Mammary epithelial cell (primary cell): ENCODE measurements at regions of chr19 and their contacts with region 1.

Region 1: DNA sequence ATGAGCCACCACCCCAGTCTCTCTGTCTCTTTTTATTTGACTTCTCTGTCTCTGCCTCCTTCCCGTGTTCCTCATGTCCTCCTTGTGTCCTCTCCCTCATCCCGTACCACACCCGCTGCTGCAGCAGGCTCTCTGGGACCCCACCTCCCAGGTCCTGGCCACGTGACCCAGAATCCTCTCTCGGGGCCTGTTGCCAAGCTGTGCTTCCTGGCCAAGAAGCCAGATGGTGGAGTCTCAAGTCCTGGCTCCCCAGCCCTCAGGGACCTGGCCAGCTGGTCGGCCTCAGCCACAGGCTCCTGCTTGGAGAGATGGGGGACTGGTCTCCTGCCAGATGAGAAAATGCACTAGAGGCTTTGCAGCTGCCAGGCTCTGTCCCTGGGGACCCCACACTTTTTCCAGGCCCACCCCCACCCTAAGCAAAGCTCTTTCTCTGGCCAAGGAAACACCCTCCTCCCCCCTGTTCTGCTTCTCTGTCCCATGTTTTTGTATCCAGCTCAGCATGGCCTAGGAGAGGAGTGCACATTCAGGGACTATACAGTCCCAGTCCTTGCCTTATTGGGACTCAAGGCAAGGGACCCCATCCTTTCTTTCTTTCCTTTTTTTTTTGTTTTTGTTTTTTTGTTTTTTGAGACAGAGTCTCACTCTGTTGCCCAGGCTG is 34.3 kb upstream of the SHKBP1 start:
- DNase-seq: no peak
- H3K4me3 ChIP-seq: no peak overlapping the region
- H3K27ac ChIP-seq: no peak overlapping the region
- H3K4me1 ChIP-seq: no peaks in the 10 kb centered on the region
- H3K27me3 ChIP-seq: no peaks in the 10 kb centered on the region
- CTCF ChIP-seq: no peak

Region 2: GRCh38 chr19:40365613-40366401 is 176.5 kb before region 1 on chr19:
- CTCF ChIA-PET with region 1: no interaction called
- dilution Hi-C with region 1: loop called (anchors 5 kb)
- in situ Hi-C with region 1: no loop called
- intact Hi-C with region 1: no loop called
- DNase-seq: no peak
- H3K4me3 ChIP-seq: peak overlapping the region; percentile 50 to 54 (median 53)
- H3K27ac ChIP-seq: no peak overlapping the region
- H3K4me1 ChIP-seq: peaks cover 9% of the 10 kb centered on the region
- H3K27me3 ChIP-seq: no peaks in the 10 kb centered on the region
- CTCF ChIP-seq: no peak

Region 3: GRCh38 chr19:40497214-40497613 is 45.1 kb before region 1 on chr19:
- CTCF ChIA-PET with region 1: no interaction called
- dilution Hi-C with region 1: no loop called
- in situ Hi-C with region 1: no loop called
- intact Hi-C with region 1: no loop called
- DNase-seq: no peak
- H3K4me3 ChIP-seq: no peak overlapping the region
- H3K27ac ChIP-seq: no peak overlapping the region
- H3K4me1 ChIP-seq: no peaks in the 10 kb centered on the region
- H3K27me3 ChIP-seq: peaks cover 4% of the 10 kb centered on the region
- CTCF ChIP-seq: no peak

Region 4: DNA sequence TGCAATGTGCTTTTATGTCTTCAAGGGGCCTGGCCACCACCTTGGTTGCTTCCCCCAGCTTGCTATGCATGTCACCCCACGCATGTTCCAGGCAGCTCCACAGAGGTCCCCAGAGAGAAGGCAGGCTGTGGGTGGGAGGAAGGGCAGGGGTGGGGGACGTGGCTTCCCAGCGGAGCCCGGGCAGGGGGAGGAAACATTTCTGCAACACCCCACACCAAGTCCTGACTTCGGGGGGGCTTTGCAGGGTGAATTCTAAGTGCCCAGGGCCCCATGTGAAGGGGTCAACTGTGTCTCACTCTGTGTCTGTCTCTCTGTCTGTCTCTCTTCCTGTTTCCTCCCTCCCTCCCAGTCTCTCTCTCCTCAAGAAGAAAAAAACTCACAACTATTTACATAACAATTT is 98.4 kb after region 1 on chr19:
- CTCF ChIA-PET with region 1: no interaction called
- dilution Hi-C with region 1: no loop called
- in situ Hi-C with region 1: no loop called
- intact Hi-C with region 1: no loop called
- DNase-seq: no peak
- H3K4me3 ChIP-seq: no peak overlapping the region
- H3K27ac ChIP-seq: no peak overlapping the region
- H3K4me1 ChIP-seq: peaks cover 2% of the 10 kb centered on the region
- H3K27me3 ChIP-seq: no peaks in the 10 kb centered on the region
- CTCF ChIP-seq: no peak

Region 5: DNA sequence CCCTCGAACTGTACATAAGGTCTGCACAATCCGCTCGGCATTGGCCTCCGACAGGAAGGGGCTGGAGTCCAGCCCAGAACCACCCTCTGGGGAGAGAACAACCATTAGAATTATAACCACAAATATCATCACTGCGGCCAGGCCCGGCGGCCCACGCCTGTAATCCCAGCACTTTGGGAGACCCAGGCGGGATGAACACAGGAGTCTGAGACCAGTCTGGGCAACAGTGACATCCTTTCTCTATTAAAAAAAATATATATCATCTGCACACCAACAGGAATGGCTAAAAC is 163.0 kb after region 1 on chr19:
- CTCF ChIA-PET with region 1: no interaction called
- dilution Hi-C with region 1: no loop called
- in situ Hi-C with region 1: no loop called
- intact Hi-C with region 1: no loop called
- DNase-seq: no peak
- H3K4me3 ChIP-seq: no peak overlapping the region
- H3K27ac ChIP-seq: no peak overlapping the region
- H3K4me1 ChIP-seq: no peaks in the 10 kb centered on the region
- H3K27me3 ChIP-seq: no peaks in the 10 kb centered on the region
- CTCF ChIP-seq: no peak

Region 6: GRCh38 chr19:40791349-40791748 is 249.0 kb after region 1 on chr19:
- CTCF ChIA-PET with region 1: no interaction called
- dilution Hi-C with region 1: no loop called
- in situ Hi-C with region 1: no loop called
- intact Hi-C with region 1: no loop called
- DNase-seq: no peak
- H3K4me3 ChIP-seq: no peak overlapping the region
- H3K27ac ChIP-seq: no peak overlapping the region
- H3K4me1 ChIP-seq: no peaks in the 10 kb centered on the region
- H3K27me3 ChIP-seq: no peaks in the 10 kb centered on the region
- CTCF ChIP-seq: no peak